CD4-positive, alpha-beta T cell (primary cell): ENCODE measurements at regions of chrX and their contacts with region 1.

Region 1: DNA sequence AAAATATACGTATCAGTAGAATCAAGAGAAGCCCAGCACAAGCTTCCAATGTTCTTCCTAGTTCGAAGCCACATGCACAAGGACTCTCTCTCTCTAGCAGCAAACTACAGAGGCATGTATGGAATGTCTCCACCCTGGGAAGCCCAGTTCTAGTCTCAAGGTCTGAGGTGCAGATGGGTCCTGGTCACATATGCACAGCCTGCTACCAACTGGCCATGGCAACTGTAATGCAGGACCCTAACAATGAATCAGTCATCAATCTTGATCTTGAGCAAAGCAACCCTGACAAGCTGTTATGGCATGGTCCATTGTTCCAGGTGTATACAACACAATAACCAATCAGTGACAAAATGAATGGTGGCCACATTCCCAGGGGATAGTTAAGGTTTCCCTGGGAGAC is 55.8 kb downstream of the MBNL3 start:
- DNase-seq: no peak
- ATAC-seq: no peak
- H3K4me3 ChIP-seq: no peak overlapping the region
- H3K4me3 Mint-ChIP-seq: no peak overlapping the region
- H3K27ac ChIP-seq: no peak overlapping the region
- H3K27ac Mint-ChIP-seq: no peak overlapping the region
- H3K4me1 ChIP-seq: no peaks in the 10 kb centered on the region
- H3K4me1 Mint-ChIP-seq: no peaks in the 10 kb centered on the region
- H3K27me3 ChIP-seq: no peaks in the 10 kb centered on the region
- H3K27me3 Mint-ChIP-seq: no peaks in the 10 kb centered on the region
- CTCF ChIP-seq: no peak

Region 2: GRCh38 chrX:132452911-132453550 is 20.0 kb after region 1 on chrX:
- CTCF ChIA-PET with region 1: no interaction called
- POLR2A ChIA-PET with region 1: no interaction called
- intact Hi-C with region 1: no loop called
- DNase-seq: no peak
- ATAC-seq: no peak
- H3K4me3 ChIP-seq: no peak overlapping the region
- H3K4me3 Mint-ChIP-seq: no peak overlapping the region
- H3K27ac ChIP-seq: no peak overlapping the region
- H3K27ac Mint-ChIP-seq: no peak overlapping the region
- H3K4me1 ChIP-seq: no peaks in the 10 kb centered on the region
- H3K4me1 Mint-ChIP-seq: peaks cover 7% of the 10 kb centered on the region
- H3K27me3 ChIP-seq: no peaks in the 10 kb centered on the region
- H3K27me3 Mint-ChIP-seq: no peaks in the 10 kb centered on the region
- CTCF ChIP-seq: no peak

Region 3: DNA sequence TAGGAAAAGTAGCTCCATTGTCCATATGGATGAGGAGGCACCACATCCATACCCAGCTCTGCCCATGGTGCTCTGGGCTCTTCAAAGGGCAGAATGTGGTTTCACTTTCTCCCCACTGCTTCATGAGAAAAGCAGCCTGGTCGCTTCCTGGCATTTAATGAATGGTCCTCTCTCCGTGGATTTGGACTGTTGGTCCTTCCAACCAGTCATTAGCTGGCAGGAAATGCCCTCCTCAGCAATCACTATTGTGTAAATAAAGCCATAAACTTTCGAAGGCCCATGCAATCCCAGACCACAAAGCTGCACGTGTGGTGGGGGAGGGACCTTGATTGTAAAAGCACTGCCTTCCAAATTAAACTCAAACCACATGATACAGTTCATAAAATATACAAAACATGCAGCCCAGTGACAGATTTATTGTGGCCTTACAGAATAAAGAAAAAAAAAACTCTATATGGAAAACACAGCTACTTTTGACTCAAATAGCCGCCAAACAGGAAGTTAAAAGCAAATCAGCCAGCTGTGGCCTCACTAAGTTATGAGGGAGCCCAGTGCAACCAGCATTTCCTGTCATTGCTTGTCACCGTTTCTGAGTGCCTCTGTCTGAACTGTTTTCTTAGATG is 47.7 kb after region 1 on chrX:
- CTCF ChIA-PET with region 1: no interaction called
- POLR2A ChIA-PET with region 1: no interaction called
- intact Hi-C with region 1: loop called in 1 of 2 experiments (anchors 5 kb)
- DNase-seq: peak in 13 of 14 experiments; percentile 15 to 73 (median 28)
- ATAC-seq: peak; percentile 93
- H3K4me3 ChIP-seq: peak overlapping the region; percentile 52
- H3K4me3 Mint-ChIP-seq: peak overlapping the region; percentile 92
- H3K27ac ChIP-seq: peak overlapping the region; percentile 65 to 67
- H3K27ac Mint-ChIP-seq: peak overlapping the region; percentile 98
- H3K4me1 ChIP-seq: peaks cover 25% of the 10 kb centered on the region
- H3K4me1 Mint-ChIP-seq: peaks cover 68% of the 10 kb centered on the region
- H3K27me3 ChIP-seq: no peaks in the 10 kb centered on the region
- H3K27me3 Mint-ChIP-seq: no peaks in the 10 kb centered on the region
- CTCF ChIP-seq: no peak